ENCODE measurements at regions of chr19 and their contacts with region 1.

Region 1: GRCh38 chr19:46474211-46474610 is 2.8 kb upstream of the PNMA8A start:
- DNase-seq: peak; percentile 29
- H3K4me3 Mint-ChIP-seq: peak overlapping the region; percentile 6
- H3K27ac Mint-ChIP-seq: peak overlapping the region; percentile 71
- H3K4me1 Mint-ChIP-seq: peaks cover 18% of the 10 kb centered on the region
- H3K27me3 Mint-ChIP-seq: no peaks in the 10 kb centered on the region
- CTCF ChIP-seq: no peak

Region 2: DNA sequence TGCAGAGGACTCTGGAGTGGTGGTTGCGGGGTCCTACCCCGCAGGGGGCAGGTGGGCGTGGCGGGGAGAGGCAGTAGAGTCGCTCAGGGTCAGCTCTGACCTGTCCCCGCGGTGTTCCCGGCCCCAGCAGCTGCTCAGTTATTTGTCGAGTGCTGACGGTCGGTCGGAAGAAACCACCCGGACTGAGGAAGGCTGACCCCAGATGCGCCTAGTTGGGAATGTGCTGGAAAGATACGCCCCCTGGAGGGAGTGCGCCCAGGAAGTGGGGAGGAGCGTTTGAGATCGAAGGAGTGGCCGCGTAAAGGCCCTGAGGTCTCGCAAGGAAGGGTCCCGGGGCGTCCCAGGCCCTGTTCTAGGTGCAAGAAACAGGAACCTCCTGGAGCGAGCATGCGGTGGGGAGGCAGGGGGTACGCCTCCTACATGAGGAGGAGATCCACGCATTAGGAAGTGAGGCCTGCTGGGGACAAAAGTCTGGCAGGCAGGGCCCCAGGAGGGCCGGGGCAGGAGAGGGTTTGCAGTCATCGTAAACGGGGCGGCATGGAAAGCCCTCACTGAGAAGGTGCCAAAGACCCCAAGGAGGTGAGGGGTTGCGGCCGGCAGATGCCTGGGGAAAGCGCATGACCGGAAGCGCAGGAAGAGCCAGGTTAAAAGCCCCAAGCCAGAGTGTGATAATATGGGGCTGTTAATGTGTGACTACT is 70.0 kb before region 1 on chr19:
- CTCF ChIA-PET with region 1: interaction called, 12 read pairs
- POLR2A ChIA-PET with region 1: interaction called, 3 read pairs
- intact Hi-C with region 1: no loop called
- DNase-seq: no peak
- H3K4me3 Mint-ChIP-seq: no peak overlapping the region
- H3K27ac Mint-ChIP-seq: no peak overlapping the region
- H3K4me1 Mint-ChIP-seq: peaks cover 5% of the 10 kb centered on the region
- H3K27me3 Mint-ChIP-seq: no peaks in the 10 kb centered on the region
- CTCF ChIP-seq: no peak

Region 3: DNA sequence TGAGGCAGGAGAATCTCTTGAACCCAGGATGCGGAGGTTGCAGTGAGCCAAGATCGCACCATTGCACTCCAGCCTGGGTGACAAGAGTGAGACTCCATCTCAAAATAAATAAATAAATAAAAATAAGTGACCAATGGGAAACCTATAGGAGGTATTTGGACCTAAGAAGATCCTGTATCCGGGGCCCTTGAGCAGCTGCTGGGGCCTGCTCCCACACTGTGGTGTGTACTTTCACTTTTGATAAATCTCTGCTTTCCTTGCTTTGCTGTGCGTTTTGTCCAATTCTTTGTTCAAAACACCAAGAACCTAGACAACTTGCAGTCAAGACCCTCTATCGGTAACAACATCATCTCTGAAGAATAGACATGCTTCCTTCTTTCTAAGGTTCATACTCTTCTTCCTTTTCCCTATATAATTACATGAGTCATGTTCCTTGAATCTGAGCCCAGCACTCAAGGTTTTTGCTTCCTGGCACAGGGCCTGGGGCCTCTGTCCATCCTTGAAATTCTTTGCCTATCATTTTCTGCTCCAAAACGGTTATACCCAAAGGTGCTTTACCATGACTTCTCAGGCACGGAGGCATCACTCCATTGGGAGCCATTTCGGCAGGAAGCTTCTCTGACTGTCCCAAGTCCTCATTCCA is 31.3 kb before region 1 on chr19:
- CTCF ChIA-PET with region 1: no interaction called
- POLR2A ChIA-PET with region 1: interaction called, 12 read pairs
- intact Hi-C with region 1: no loop called
- DNase-seq: peak; percentile 88
- H3K4me3 Mint-ChIP-seq: no peak overlapping the region
- H3K27ac Mint-ChIP-seq: no peak overlapping the region
- H3K4me1 Mint-ChIP-seq: peaks cover 8% of the 10 kb centered on the region
- H3K27me3 Mint-ChIP-seq: no peaks in the 10 kb centered on the region
- CTCF ChIP-seq: no peak

Region 4: GRCh38 chr19:46529622-46530462 is 55.6 kb after region 1 on chr19:
- CTCF ChIA-PET with region 1: no interaction called
- POLR2A ChIA-PET with region 1: no interaction called
- intact Hi-C with region 1: no loop called
- DNase-seq: peak; percentile 75
- H3K4me3 Mint-ChIP-seq: peak overlapping the region; percentile 39
- H3K27ac Mint-ChIP-seq: no peak overlapping the region
- H3K4me1 Mint-ChIP-seq: peaks cover 15% of the 10 kb centered on the region
- H3K27me3 Mint-ChIP-seq: no peaks in the 10 kb centered on the region
- CTCF ChIP-seq: peak; percentile 94

Region 5: GRCh38 chr19:46753420-46754155 is 279.4 kb after region 1 on chr19:
- CTCF ChIA-PET with region 1: no interaction called
- POLR2A ChIA-PET with region 1: no interaction called
- intact Hi-C with region 1: no loop called
- DNase-seq: peak; percentile 69
- H3K4me3 Mint-ChIP-seq: no peak overlapping the region
- H3K27ac Mint-ChIP-seq: no peak overlapping the region
- H3K4me1 Mint-ChIP-seq: peaks cover 11% of the 10 kb centered on the region
- H3K27me3 Mint-ChIP-seq: no peaks in the 10 kb centered on the region
- CTCF ChIP-seq: no peak

Measured in MCF 10A (cell line).